Testis (tissue), 5 donors: ENCODE measurements at regions of chr11 and their contacts with region 1.

Region 1: GRCh38 chr11:120489799-120490198 is 21.7 kb upstream of the GRIK4 start:
- DNase-seq: no peak
- H3K4me3 ChIP-seq: no peak overlapping the region
- H3K27ac ChIP-seq: no peak overlapping the region
- H3K4me1 ChIP-seq: no peaks in the 10 kb centered on the region
- H3K27me3 ChIP-seq: no peaks in the 10 kb centered on the region
- CTCF ChIP-seq: no peak
- POLR2A ChIP-seq: no peak

Region 2: DNA sequence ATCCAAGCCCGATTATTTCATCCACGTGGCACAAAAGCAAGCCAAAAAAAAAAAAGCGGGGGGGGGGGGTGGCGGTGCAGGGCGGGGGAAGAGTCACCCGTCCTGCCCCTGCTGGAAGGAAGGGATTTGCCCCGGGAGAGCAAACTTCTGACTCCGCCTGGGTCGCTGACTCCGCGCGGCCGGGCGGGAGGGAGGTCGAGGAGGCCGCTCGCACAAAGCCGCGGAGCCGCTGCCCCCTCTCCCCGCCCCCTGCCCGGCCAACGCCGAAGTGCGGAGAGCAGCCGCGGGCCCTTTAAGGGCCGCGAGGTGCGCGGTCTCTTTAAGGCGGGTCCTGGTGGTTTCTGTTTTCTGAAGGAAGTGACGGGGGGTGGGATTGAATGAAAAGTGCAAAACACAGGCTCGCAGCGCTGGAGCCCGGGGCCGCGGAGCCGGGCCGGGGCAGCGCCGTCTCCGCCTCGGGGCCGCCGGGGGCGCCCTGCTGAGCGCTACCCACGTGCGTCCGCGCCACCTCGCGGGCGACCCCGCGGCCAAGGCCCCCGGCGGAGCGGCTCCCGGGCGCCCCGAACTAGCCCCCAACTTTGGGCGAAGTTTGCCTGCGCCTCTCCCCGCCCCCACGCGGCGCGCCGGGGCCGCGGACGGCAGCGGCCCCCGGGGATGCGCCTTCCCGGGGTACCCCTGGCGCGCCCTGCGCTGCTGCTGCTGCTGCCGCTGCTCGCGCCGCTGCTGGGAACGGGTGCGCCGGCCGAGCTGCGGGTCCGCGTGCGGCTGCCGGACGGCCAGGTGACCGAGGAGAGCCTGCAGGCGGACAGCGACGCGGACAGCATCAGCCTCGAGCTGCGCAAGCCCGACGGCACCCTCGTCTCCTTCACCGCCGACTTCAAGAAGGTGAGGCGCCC is 278.9 kb before region 1 on chr11 and contains the start of gene OAF:
- intact Hi-C with region 1: no loop called
- DNase-seq: peak; percentile 78
- H3K4me3 ChIP-seq: peak within 1 kb of the TSS; percentile 70 to 71
- H3K27ac ChIP-seq: peak within 1 kb of the TSS; percentile 24 to 72
- H3K4me1 ChIP-seq: peaks cover 30% of the 10 kb centered on the region
- H3K27me3 ChIP-seq: no peaks in the 10 kb centered on the region
- CTCF ChIP-seq: peak in 1 of 3 experiments; percentile 33
- POLR2A ChIP-seq: no peak
- total RNA-seq, gene OAF: 8.5 to 11.0 TPM

Region 3: DNA sequence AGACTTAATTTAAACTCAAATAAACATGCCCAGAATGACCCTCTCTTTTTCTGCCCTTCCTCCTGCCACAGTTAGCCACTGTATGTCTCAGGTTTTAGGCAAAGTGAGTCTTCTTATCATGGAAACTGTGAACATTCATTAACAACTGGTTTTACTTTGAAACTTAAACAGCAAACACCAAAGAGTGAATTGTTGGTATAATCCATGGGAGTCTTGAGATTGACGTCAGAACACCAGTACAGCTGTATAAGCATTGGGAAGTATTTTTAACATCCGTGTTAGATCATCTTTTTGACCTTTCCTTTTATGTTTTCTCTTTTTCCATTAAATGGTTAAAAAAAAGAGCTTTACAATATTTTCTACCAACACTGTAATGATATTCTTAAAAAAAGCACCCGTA is 114.7 kb before region 1 on chr11:
- intact Hi-C with region 1: no loop called
- DNase-seq: no peak
- H3K4me3 ChIP-seq: no peak overlapping the region
- H3K27ac ChIP-seq: no peak overlapping the region
- H3K4me1 ChIP-seq: no peaks in the 10 kb centered on the region
- H3K27me3 ChIP-seq: no peaks in the 10 kb centered on the region
- CTCF ChIP-seq: no peak
- POLR2A ChIP-seq: no peak

Region 4: DNA sequence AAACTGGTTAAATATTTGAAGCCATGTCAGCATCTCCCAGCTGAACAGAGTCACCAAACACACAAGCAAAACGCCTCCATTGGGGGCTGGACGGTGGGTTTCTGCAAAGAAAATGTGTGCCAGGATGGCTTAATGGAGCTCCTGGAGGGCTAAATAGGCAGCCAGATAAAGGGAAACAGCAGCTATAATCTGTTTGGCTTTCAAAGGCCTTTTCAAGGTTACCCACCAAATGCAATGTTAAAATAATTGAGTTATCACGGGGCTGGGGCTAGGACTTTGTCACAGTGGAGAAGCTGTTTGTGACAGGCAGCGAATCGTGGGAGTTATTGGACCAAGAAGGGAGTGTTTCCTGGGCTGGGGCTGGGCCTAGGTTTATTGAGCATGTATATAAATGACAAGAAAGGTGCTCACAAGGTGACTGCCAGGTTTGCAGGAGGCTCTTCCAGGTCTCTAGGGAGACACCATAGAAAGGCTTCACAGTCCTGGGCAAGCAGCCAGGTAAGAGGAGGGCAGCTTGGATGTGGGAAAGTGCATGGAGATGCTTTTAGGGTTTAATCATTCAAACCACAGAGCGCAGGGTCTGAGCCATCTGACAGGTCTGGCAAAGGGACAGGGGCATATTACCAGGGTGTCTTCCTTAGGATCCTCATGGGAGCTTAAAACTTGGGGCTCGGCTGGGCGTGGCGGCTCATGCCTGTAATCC is 50.0 kb after region 1 on chr11:
- intact Hi-C with region 1: loop called (anchors 2 kb)
- DNase-seq: no peak
- H3K4me3 ChIP-seq: no peak overlapping the region
- H3K27ac ChIP-seq: no peak overlapping the region
- H3K4me1 ChIP-seq: no peaks in the 10 kb centered on the region
- H3K27me3 ChIP-seq: no peaks in the 10 kb centered on the region
- CTCF ChIP-seq: no peak
- POLR2A ChIP-seq: no peak